Posterior cingulate gyrus (tissue), 11 donors: ENCODE measurements at regions of chr9 and their contacts with region 1.

Region 1: DNA sequence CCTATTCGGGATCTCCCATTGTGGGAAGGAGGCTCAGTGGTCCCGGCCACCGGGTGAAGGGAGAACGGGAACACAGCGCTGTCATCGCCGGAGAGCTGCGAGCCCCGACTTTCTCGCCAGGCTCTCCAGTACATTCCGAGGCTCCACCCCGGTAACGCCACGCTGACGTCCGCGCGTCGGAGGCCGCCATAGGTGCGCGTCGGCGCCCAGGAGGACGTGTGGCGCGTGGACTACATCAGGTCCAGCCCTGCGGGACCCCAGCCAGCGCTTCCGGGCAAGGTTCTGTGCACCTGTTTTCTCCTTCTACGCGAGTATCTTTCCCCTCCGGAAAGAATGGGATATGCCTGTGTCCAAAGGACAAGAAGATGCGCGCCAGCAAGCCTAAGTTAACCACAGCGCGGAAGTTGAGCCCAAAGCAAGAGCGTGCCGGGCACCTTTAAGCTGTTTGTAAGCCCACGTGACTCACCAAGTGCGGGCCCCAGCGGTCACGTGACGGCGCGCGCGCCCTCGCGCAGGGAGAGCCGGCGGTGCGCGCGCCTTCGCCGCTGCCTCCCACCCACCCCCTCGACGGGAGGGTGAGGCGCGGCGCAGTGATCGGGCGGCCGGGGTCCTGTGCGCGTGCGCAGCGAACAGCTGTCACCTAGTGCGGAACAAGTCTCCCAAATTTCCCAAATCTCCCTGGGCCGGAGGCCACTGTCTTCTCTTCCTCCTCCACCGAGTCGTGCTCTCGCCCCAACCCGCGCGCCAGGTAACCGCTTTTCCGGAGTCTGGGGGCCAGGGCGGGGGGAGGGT is at the start of gene KDM4C:
- DNase-seq: peak; percentile 87 to 99 (median 92)

Region 2: GRCh38 chr9:6412487-6413364 is 344.9 kb before region 1 on chr9 and contains the start of gene UHRF2:
- intact Hi-C with region 1: loop called (anchors 2 kb)
- DNase-seq: peak; percentile 94 to 99 (median 98)

Region 3: DNA sequence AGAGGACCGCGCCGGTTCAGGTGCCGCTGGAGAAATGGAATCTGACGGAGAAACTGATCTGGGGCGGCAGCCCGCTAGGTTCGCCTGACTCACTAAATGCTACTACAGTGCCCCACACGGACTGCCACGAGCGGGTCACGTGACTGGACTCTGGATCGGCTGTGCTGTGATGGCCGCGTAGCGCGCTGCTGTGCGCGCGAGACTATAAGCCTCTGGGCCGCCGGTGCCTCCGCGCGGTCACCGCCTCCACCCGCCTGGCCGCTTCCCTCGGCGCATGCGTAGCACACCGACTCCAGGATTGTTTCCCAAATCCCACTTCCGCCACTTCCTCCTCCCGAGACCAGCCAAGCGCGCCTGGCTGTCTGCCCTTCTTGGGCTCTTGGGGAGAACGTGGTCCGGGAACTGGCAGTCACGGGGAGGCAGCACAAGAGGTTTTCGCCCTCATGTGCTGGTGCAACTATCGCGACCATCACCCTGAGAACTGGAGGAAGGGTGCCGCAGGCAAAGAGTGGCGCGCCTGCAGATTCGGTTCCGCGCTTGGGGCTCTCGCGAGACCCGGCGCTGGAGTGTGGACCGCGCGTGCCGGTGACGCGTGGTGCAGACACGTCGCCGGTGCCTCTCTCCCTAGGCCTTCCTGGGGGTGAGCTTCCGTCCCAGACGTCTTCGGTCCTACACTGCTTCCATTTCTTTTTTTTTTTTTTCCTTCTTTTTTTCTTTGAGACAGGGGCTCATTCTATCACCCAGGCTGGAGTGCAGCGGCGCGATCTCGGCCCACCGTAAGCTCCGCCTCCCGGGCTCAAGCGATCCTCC is 76.3 kb before region 1 on chr9:
- intact Hi-C with region 1: loop called (anchors 5 kb)
- DNase-seq: peak; percentile 92 to 99 (median 96)

Region 4: DNA sequence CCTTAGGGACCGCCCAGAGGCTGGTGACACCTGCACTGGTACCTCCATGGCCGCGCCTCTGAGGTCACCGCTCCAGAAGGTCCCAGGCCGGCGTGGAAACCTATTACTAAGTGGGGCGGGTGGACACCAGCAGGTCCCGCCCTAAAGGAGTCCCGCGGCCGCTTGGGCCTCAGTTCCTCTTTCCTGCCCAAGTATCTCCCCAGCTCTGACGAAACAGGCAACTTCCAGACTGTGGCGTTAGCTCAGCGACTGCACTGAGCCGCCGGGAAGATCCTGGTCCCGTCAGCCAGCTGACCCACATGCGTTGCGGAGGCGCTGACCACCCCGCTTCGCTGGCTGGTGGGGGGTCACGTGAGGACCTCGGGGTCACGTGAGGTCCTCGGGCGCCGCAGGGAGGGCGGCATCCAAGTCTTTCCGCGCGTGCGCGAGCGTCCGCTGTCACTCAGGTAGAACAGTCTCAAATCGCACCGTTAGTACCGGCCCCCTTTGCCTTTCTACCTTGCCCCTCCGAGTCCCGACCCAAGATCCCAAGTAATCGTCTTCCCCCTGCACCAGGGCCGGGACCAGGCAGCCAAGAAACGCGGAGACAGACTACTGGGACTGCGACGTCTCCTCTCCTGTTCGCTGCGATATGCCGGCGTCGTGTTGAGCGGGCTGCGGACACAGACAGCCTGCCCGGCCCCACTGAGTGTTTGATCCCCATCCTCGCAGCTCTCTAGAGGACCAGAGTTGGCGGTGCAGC is 53.6 kb before region 1 on chr9:
- intact Hi-C with region 1: loop called (anchors 2 kb)
- DNase-seq: peak; percentile 67 to 98 (median 86)

Region 5: GRCh38 chr9:6779417-6780241 is 22.0 kb after region 1 on chr9:
- intact Hi-C with region 1: loop called (anchors 2 kb)
- DNase-seq: no peak

Region 6: DNA sequence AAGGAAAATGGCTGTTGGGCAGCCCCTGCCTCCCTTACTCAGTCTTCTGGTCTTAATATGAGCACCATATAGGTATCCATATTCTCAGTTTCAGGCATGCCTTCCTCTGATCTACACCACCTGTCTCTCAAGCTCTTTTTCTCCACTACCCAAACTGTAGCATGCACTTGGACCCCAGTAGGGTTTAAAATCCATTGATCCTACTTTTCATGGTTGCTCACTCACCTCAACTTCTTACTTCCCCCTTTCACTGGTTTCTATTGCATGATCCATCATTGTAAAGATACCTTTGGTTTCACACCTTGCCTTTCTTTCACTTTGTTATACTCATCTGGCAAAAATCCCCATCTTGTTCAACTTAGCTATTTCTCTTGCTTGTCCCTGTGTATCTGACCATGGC is 159.5 kb after region 1 on chr9:
- intact Hi-C with region 1: no loop called
- DNase-seq: no peak